Posterior cingulate gyrus (tissue), 11 donors: ENCODE measurements at regions of chr20 and their contacts with region 1.

Region 1: GRCh38 chr20:50467718-50468356 is 42.3 kb upstream of the PTPN1 start:
- DNase-seq: peak in 6 of 10 donors; percentile 29 to 92 (median 54)

Region 2: DNA sequence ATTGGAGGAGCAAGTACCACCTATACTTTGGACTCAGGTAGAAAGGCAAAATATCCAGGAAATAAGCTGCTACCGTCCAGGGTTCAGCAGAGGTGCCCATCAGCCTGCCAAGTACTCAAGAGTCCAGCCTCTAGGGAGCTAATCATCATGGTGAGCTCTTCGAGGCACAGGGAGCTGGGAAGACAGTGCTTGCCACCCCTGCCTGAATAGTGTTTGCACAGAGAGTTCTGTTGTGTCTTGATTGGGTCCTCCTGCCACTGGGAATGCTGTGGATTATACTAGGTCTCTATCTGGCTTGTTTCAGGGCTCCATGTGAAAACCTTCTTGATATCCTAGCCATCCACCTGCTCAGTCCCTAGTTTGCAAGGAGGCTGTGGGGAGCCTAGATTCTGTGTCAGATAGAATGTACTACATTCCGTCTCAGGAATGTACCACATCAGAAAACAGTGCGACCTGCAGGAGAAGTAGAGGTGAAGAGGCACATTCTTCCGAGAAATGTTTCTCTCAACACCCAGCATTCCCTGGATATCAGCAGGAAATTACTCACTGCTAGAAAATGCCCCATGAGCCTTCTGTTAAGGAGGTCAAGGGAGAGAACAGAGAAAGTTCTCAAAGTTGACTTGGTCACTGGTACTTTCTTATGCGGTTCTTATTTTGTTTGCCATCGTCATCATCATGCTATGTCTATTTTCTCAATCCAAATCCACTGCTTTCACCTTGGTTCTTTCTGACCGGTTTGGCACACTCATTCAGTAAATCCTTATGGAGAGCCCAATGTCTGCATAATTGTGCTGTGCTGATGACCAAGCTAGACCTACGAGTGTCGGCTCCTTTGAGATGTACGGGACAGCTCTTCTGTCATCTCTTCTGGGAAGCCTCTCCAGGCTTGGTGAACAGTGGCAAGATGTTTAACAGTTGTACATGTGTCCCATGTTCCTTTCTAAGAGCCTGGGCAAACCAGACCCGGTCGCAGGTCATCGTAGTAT is 73.1 kb after region 1 on chr20:
- intact Hi-C with region 1: no loop called
- DNase-seq: no peak

Region 3: GRCh38 chr20:50575847-50576720 is 108.2 kb after region 1 on chr20:
- intact Hi-C with region 1: loop called (anchors 5 kb)
- DNase-seq: peak in 8 of 10 donors; percentile 58 to 94 (median 72)